Tibial artery (tissue), 4 donors: ENCODE measurements at regions of chr9 and their contacts with region 1.

Region 1: GRCh38 chr9:130940693-130941576 is 1.9 kb upstream of the FIBCD1 start:
- DNase-seq: peak; percentile 51 to 81
- H3K4me3 ChIP-seq: no peak overlapping the region
- H3K27ac ChIP-seq: no peak overlapping the region
- H3K4me1 ChIP-seq: peaks cover 0 to 49% (median 38%) of the 10 kb centered on the region in 4 donors
- H3K27me3 ChIP-seq: peaks cover 7 to 74% of the 10 kb centered on the region in 2 donors
- CTCF ChIP-seq: peak; percentile 83 to 91

Region 2: DNA sequence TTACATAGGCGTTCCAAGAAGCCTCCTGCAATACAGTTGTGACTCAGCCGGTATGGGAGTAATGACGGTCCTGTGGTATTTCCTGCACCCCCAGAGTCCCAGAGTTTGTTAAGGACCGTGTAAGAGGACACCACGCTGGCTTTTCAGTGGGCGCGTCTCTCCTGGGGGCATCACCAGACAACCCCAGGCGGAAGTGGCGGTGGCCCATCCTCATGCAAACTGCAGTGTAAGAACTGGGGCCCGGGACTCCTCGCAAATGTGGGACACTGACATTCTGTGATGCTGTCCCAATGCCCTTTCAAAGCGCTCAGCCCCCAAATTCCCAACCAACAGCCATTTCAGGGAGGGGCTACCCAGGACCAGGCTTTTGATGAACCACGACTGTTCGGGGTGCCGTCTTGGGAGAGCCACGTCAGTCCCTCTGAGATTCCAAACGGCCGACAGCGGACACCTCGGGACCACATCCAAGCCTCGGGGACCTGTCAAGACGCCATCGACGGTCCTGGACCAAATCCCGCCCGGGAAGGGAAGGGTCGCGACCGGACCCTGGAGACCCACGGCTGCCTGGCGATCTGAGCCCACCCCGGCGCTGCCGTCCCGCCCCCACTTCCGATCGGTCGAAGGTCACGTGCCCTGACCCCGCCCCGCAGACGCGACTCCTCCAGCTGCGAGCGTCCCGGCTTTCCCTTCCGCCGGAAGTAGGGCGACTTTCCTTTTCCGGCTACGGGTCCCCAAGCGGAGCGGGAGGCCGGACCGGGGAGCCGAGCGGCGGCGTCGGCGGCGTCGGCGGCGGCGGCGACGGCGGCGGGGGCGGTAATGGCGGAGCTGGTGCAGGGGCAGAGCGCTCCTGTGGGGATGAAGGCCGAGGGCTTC is 361.8 kb before region 1 on chr9 and contains the start of gene FUBP3:
- intact Hi-C with region 1: no loop called
- DNase-seq: peak; percentile 92 to 96
- H3K4me3 ChIP-seq: peak within 1 kb of the TSS; percentile 84 to 97
- H3K27ac ChIP-seq: peak within 1 kb of the TSS; percentile 86 to 87
- H3K4me1 ChIP-seq: peaks cover 0 to 35% (median 27%) of the 10 kb centered on the region in 4 donors
- H3K27me3 ChIP-seq: no peaks in the 10 kb centered on the region
- CTCF ChIP-seq: no peak

Region 3: DNA sequence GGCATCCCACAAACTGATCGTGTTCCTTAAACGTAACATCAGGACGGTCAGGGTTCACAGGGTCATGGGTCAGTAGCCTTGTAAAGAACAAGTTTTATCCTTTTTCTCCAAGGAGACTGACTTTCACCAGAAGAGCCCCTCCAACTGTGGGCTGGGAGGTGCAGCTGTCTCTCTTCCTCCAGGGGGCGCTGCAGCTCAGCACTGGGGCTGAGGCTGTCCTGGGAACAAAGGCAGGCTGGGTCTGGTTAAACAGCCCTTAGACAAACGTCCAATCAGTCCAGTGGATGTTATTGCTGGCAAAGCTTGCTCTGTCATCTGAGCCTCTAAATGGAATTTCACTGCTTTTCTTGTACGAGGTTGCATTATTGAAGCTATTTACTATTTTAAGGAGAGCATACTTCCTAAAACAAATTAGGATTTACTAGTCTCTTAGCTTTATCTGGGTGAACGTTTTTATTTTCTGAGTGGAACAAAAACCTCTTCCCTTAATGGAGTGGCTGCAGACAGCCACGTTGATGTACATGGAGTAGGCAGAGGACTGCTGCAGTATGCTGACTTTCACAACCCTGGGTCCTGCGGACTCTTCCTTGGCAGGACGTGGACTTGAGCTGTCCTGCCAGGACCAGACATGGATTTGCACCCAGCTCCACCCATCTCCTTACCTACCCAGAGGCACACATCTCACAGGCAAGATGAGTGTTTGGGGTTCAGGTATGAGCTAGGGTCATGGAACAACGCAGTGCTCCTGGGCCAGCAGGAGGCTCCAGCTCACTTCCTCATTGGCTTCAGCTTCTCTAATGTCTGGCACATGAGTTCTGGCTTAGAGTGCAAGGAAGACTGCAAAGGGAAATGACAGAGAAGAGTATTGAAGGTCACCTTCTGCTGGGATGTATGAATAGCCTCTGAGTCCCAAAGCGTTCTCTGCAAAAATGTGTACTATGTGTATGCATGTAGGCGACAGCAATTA is 239.6 kb before region 1 on chr9:
- intact Hi-C with region 1: loop called (anchors 2 kb)
- DNase-seq: peak; percentile 71 to 86
- H3K4me3 ChIP-seq: no peak overlapping the region
- H3K27ac ChIP-seq: peak overlapping the region; percentile 35 to 41
- H3K4me1 ChIP-seq: peaks cover 0 to 15% (median 7%) of the 10 kb centered on the region in 4 donors
- H3K27me3 ChIP-seq: no peaks in the 10 kb centered on the region
- CTCF ChIP-seq: peak; percentile 89 to 94

Region 4: GRCh38 chr9:130707225-130707976 is 233.5 kb before region 1 on chr9:
- intact Hi-C with region 1: loop called (anchors 2 kb)
- DNase-seq: peak; percentile 69 to 71
- H3K4me3 ChIP-seq: no peak overlapping the region
- H3K27ac ChIP-seq: no peak overlapping the region
- H3K4me1 ChIP-seq: peaks cover 0 to 7% (median 3%) of the 10 kb centered on the region in 4 donors
- H3K27me3 ChIP-seq: no peaks in the 10 kb centered on the region
- CTCF ChIP-seq: peak; percentile 68 to 75

Region 5: DNA sequence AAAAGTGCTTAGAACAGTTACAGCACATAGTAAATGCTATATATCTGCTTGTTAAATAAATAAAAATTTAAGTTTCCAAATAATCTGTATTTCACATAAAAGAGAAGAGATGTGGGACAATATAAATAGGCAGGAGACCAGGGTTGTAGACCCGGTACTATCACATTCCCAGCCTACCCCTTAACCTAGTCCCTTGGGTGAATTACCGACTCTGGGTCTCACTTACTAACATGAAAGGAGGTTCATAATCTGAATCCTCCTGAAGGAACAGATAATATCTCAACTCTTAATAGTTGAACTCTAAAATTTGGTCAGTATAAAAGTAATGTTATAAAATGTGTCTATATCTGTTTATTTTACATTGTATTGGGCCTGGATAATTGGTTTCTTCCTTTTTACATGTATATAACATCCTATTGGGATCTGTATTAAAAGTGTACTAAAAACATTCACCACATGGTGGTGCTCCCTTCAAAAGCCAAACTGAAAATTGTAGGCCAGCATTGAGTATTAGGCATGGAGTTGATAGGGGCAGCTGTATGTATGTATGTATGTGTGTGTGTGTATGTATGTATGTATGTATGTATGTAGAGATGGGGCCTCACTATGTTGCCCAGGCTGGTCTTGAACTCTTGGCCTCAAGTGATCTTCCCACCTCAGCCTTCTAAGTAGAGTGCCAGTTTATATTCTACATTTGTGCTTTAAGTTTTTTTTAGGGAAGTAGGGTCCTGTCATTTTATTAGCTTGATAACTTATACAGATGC is 170.1 kb before region 1 on chr9:
- intact Hi-C with region 1: loop called (anchors 10 kb)
- DNase-seq: no peak
- H3K4me3 ChIP-seq: no peak overlapping the region
- H3K27ac ChIP-seq: no peak overlapping the region
- H3K4me1 ChIP-seq: peaks cover 0 to 15% (median 11%) of the 10 kb centered on the region in 4 donors
- H3K27me3 ChIP-seq: no peaks in the 10 kb centered on the region
- CTCF ChIP-seq: peak; percentile 68 to 84

Region 6: GRCh38 chr9:130866474-130866965 is 74.4 kb before region 1 on chr9:
- intact Hi-C with region 1: loop called (anchors 5 kb)
- DNase-seq: peak in 1 of 2 donors; percentile 70
- H3K4me3 ChIP-seq: no peak overlapping the region
- H3K27ac ChIP-seq: peak overlapping the region in 1 of 2 donors; percentile 27
- H3K4me1 ChIP-seq: peaks cover 0 to 81% (median 29%) of the 10 kb centered on the region in 4 donors
- H3K27me3 ChIP-seq: no peaks in the 10 kb centered on the region
- CTCF ChIP-seq: peak; percentile 76 to 77

Region 7: DNA sequence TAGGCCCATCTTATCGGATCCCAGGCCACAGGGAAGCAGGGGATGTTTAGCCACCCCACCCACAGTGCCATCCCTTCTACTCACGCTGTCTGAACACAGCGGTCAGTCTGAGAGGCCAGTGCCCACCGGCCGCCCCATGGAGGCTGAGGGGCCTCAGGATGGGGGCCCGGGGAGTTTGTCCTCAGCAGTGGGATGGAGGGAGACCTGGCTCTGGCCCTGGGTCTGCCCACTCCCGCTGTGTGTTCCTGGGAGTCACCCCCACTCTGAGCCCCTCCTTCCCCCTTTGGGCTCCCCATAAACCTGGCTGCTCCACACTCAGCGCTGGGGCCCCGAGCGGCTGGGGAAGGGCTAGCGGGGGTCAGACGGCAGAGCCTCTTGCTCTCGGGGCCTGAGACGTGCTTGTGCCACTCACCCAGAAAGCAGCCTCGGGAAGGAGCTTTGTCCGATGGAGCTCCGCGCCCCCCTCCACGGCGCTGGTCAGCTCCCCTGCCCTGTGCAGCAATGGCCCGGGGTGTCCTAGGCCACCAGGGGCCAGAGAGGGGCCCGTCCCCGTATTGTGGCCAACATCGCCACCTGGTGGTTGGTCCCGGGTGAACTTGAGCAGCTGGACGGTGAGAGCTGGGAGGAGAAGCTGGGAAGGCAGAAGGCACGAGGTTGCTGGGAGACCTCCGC is 57.1 kb after region 1 on chr9:
- intact Hi-C with region 1: no loop called
- DNase-seq: peak in 1 of 2 donors; percentile 29
- H3K4me3 ChIP-seq: no peak overlapping the region
- H3K27ac ChIP-seq: no peak overlapping the region
- H3K4me1 ChIP-seq: no peaks in the 10 kb centered on the region
- H3K27me3 ChIP-seq: peaks cover 0 to 79% of the 10 kb centered on the region in 2 donors
- CTCF ChIP-seq: peak; percentile 48 to 54